ENCODE measurements at regions of chr12 and their contacts with region 1.

Region 1: GRCh38 chr12:81378565-81379285 is 300.8 kb downstream of the ACSS3 start:
- DNase-seq: no peak
- H3K4me3 Mint-ChIP-seq: no peak overlapping the region
- H3K27ac Mint-ChIP-seq: no peak overlapping the region
- H3K4me1 Mint-ChIP-seq: no peaks in the 10 kb centered on the region
- H3K27me3 Mint-ChIP-seq: no peaks in the 10 kb centered on the region
- CTCF ChIP-seq: no peak

Region 2: DNA sequence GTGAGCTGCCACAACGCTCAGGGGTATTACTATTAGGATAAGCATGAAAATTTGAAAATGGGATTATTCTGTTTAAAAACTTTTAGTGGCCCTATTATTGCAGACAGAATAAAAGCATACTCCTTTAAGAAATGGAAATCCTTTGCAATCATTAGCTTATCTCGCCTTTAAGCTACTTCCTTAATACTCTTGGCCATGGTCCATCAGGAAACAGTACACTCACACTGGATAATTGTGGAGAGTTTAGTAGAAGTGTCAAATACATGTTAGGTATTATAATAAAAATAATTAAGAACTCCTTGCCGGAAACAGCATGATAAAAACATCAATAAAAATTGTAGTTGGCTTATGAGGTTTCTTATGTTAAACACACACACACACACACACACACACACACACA is 480.8 kb after region 1 on chr12:
- CTCF ChIA-PET with region 1: no interaction called
- POLR2A ChIA-PET with region 1: no interaction called
- intact Hi-C with region 1: loop called (anchors 5 kb)
- DNase-seq: no peak
- H3K4me3 Mint-ChIP-seq: no peak overlapping the region
- H3K27ac Mint-ChIP-seq: no peak overlapping the region
- H3K4me1 Mint-ChIP-seq: no peaks in the 10 kb centered on the region
- H3K27me3 Mint-ChIP-seq: no peaks in the 10 kb centered on the region
- CTCF ChIP-seq: no peak